ENCODE measurements at regions of chr16 and their contacts with region 1.

Region 1: DNA sequence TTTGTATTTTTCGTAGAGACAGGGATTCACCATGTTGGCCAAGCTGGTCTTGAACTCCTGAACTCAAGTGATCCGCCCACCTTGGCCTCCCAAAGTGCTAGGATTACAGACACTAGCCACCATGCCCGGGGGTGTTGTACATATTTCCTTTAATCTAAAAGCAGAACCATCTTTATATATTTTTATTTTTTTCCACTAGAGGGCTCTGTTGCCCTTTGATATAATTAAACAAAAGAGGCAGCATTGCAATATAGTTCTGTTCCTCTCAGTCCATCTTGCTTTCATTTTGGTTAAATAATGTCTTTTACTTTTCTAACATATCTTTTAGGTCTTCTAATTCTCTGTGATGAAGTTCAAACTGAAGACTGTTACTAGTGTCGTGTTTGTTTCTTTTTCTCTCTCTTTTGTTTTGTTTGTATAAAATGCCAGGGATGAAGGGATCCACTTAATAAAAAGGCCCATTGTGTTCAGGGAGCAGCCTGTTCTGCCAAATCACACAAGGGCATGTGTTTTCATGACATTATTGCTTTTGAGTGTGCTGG is 23.4 kb downstream of the WWOX start:
- DNase-seq: no peak
- H3K4me3 ChIP-seq: peak overlapping the region in 1 of 4 donors; percentile 19
- H3K27ac ChIP-seq: peak overlapping the region in 3 of 4 donors; percentile 31 to 46 (median 46)
- H3K4me1 ChIP-seq: peaks cover 0 to 22% (median 0%) of the 10 kb centered on the region in 3 donors
- H3K27me3 ChIP-seq: no peaks in the 10 kb centered on the region
- CTCF ChIP-seq: peak; percentile 22 to 68 (median 51)
- POLR2A ChIP-seq: no peak

Region 2: GRCh38 chr16:78235168-78235800 is 112.4 kb after region 1 on chr16:
- intact Hi-C with region 1: loop called (anchors 10 kb)
- DNase-seq: no peak
- H3K4me3 ChIP-seq: no peak overlapping the region
- H3K27ac ChIP-seq: no peak overlapping the region
- H3K4me1 ChIP-seq: peaks cover 0 to 27% (median 0%) of the 10 kb centered on the region in 3 donors
- H3K27me3 ChIP-seq: no peaks in the 10 kb centered on the region
- CTCF ChIP-seq: peak; percentile 59 to 95 (median 92)
- POLR2A ChIP-seq: no peak

Region 3: GRCh38 chr16:79601931-79602627 is 1479.2 kb after region 1 on chr16:
- intact Hi-C with region 1: loop called (anchors 10 kb)
- DNase-seq: no peak
- H3K4me3 ChIP-seq: peak overlapping the region; percentile 77 to 86 (median 84)
- H3K27ac ChIP-seq: peak overlapping the region; percentile 92 to 98 (median 96)
- H3K4me1 ChIP-seq: peaks cover 8 to 45% (median 10%) of the 10 kb centered on the region in 3 donors
- H3K27me3 ChIP-seq: no peaks in the 10 kb centered on the region
- CTCF ChIP-seq: peak; percentile 71 to 86 (median 80)
- POLR2A ChIP-seq: no peak

Measured in esophagus squamous epithelium (tissue), 5 donors.